HCT116 (cell line): ENCODE measurements at regions of chr10 and their contacts with region 1.

Region 1: GRCh38 chr10:120423431-120424197 is 33.4 kb upstream of the PLPP4 start:
- DNase-seq: peak; percentile 42
- ATAC-seq: peak; percentile 90
- H3K4me3 ChIP-seq: no peak overlapping the region
- H3K27ac ChIP-seq: no peak overlapping the region
- H3K4me1 ChIP-seq: no peaks in the 10 kb centered on the region
- H3K27me3 ChIP-seq: peaks cover 26% of the 10 kb centered on the region
- CTCF ChIP-seq: peak; percentile 74 to 99 (median 98)
- POLR2A ChIP-seq: no peak
- RAD21 ChIP-seq: peak; percentile 82

Region 2: GRCh38 chr10:118990326-118990725 is 1433.3 kb before region 1 on chr10:
- CTCF ChIA-PET with region 1: no interaction called
- POLR2A ChIA-PET with region 1: no interaction called
- RAD21 ChIA-PET with region 1: no interaction called
- intact Hi-C with region 1: no loop called
- DNase-seq: no peak
- ATAC-seq: no peak
- H3K4me3 ChIP-seq: no peak overlapping the region
- H3K27ac ChIP-seq: no peak overlapping the region
- H3K4me1 ChIP-seq: no peaks in the 10 kb centered on the region
- H3K27me3 ChIP-seq: no peaks in the 10 kb centered on the region
- CTCF ChIP-seq: no peak
- POLR2A ChIP-seq: no peak
- RAD21 ChIP-seq: no peak

Region 3: GRCh38 chr10:119686439-119687191 is 737.0 kb before region 1 on chr10:
- CTCF ChIA-PET with region 1: no interaction called
- POLR2A ChIA-PET with region 1: no interaction called
- RAD21 ChIA-PET with region 1: no interaction called
- intact Hi-C with region 1: loop called (anchors 10 kb)
- DNase-seq: peak; percentile 75
- ATAC-seq: peak; percentile 88
- H3K4me3 ChIP-seq: no peak overlapping the region
- H3K27ac ChIP-seq: no peak overlapping the region
- H3K4me1 ChIP-seq: peaks cover 11 to 24% of the 10 kb centered on the region in 2 experiments
- H3K27me3 ChIP-seq: no peaks in the 10 kb centered on the region
- CTCF ChIP-seq: peak; percentile 90 to 99 (median 90)
- POLR2A ChIP-seq: no peak
- RAD21 ChIP-seq: peak; percentile 99

Region 4: DNA sequence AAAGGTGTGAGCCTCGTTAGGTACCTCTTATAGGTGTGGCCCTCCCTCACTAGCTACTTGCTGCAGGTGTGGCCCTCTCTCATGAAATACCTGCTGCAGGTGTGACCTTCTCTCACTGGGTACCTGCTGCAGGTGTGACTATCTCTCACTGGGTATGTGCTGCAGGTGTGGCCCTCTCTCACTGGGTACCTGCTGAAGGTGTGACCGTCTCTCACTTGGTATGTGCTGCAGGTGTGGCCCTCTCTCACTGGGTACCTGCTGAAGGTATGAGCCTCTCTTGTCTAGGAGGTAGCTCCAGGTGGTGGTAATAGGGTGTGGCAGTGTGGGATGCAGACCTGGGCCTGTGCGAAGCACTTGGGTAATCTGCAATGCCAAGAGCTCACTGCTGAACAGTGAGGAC is 137.3 kb before region 1 on chr10:
- CTCF ChIA-PET with region 1: no interaction called
- POLR2A ChIA-PET with region 1: no interaction called
- RAD21 ChIA-PET with region 1: no interaction called
- intact Hi-C with region 1: no loop called
- DNase-seq: no peak
- ATAC-seq: peak; percentile 32; the same call in 1 of the 2 replicates
- H3K4me3 ChIP-seq: no peak overlapping the region
- H3K27ac ChIP-seq: no peak overlapping the region
- H3K4me1 ChIP-seq: no peaks in the 10 kb centered on the region
- H3K27me3 ChIP-seq: peaks cover 24% of the 10 kb centered on the region; the same call in 1 of the 2 replicates
- CTCF ChIP-seq: no peak
- POLR2A ChIP-seq: no peak
- RAD21 ChIP-seq: no peak

Region 5: DNA sequence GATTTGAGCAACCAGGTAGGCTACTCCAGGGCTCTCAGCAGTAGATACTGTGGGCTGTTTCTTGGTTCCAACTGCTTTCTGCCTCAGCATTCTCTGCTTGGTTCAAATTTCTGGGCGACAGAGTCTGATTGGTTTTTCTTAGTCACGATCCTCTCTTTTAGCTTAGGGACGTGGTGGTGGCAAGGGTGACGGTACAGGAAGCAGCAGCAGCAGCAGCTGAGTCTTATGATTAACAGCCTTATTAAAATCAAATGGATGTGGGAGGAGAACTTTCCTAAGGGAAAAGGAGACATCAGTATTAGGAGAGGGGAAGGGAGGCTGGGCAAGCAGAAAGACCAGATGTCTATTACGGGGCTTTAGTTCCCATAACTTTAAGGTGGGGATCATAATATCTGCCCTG is 123.1 kb before region 1 on chr10:
- CTCF ChIA-PET with region 1: no interaction called
- POLR2A ChIA-PET with region 1: no interaction called
- RAD21 ChIA-PET with region 1: no interaction called
- intact Hi-C with region 1: no loop called
- DNase-seq: no peak
- ATAC-seq: no peak
- H3K4me3 ChIP-seq: no peak overlapping the region
- H3K27ac ChIP-seq: no peak overlapping the region
- H3K4me1 ChIP-seq: no peaks in the 10 kb centered on the region
- H3K27me3 ChIP-seq: peaks cover 32% of the 10 kb centered on the region
- CTCF ChIP-seq: no peak
- POLR2A ChIP-seq: no peak
- RAD21 ChIP-seq: no peak

Region 6: GRCh38 chr10:120387326-120387725 is 36.3 kb before region 1 on chr10:
- CTCF ChIA-PET with region 1: no interaction called
- POLR2A ChIA-PET with region 1: no interaction called
- RAD21 ChIA-PET with region 1: no interaction called
- intact Hi-C with region 1: no loop called
- DNase-seq: no peak
- ATAC-seq: no peak
- H3K4me3 ChIP-seq: no peak overlapping the region
- H3K27ac ChIP-seq: no peak overlapping the region
- H3K4me1 ChIP-seq: no peaks in the 10 kb centered on the region
- H3K27me3 ChIP-seq: peaks cover 56% of the 10 kb centered on the region
- CTCF ChIP-seq: no peak
- POLR2A ChIP-seq: no peak
- RAD21 ChIP-seq: no peak

Region 7: DNA sequence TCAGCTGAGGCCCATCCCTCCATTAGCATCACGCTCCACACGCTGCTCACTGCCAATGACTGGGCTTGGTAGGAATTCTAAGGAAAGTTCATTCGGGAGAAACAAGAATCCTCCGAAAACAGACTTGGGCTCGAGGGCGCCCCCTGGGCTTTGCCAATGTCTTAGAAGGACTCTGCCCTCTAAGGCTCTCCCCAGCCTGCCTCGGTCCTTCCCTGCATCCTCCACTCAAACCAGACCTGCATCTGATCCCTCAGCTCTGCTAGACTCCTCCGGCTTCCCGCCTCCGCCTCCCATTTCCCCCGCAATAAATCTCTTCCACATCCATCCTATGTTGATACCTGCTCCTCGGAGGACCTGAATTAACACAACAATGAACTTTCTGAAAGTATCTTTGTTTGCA is 211.0 kb after region 1 on chr10:
- CTCF ChIA-PET with region 1: no interaction called
- POLR2A ChIA-PET with region 1: no interaction called
- RAD21 ChIA-PET with region 1: no interaction called
- intact Hi-C with region 1: loop called (anchors 1 kb)
- DNase-seq: peak; percentile 12
- ATAC-seq: peak; percentile 94
- H3K4me3 ChIP-seq: no peak overlapping the region
- H3K27ac ChIP-seq: no peak overlapping the region
- H3K4me1 ChIP-seq: no peaks in the 10 kb centered on the region
- H3K27me3 ChIP-seq: peaks cover 13% of the 10 kb centered on the region; the same call in 1 of the 2 replicates
- CTCF ChIP-seq: peak; percentile 20 to 74 (median 73); a peak in 5 of 6 replicates
- POLR2A ChIP-seq: no peak
- RAD21 ChIP-seq: peak; percentile 46